SK-N-SH (cell line): ENCODE measurements at regions of chr1 and their contacts with region 1.

Region 1: GRCh38 chr1:53860967-53861411 is 22.9 kb upstream of the NDC1 start:
- DNase-seq: peak; percentile 64
- H3K4me3 ChIP-seq: peak overlapping the region in 1 of 2 experiments; percentile 25; a peak in 1 of 4 replicates
- H3K27ac ChIP-seq: no peak overlapping the region
- H3K4me1 ChIP-seq: no peaks in the 10 kb centered on the region
- H3K27me3 ChIP-seq: no peaks in the 10 kb centered on the region
- CTCF ChIP-seq: peak; percentile 88
- EP300 ChIP-seq: no peak
- RAD21 ChIP-seq: peak; percentile 87

Region 2: DNA sequence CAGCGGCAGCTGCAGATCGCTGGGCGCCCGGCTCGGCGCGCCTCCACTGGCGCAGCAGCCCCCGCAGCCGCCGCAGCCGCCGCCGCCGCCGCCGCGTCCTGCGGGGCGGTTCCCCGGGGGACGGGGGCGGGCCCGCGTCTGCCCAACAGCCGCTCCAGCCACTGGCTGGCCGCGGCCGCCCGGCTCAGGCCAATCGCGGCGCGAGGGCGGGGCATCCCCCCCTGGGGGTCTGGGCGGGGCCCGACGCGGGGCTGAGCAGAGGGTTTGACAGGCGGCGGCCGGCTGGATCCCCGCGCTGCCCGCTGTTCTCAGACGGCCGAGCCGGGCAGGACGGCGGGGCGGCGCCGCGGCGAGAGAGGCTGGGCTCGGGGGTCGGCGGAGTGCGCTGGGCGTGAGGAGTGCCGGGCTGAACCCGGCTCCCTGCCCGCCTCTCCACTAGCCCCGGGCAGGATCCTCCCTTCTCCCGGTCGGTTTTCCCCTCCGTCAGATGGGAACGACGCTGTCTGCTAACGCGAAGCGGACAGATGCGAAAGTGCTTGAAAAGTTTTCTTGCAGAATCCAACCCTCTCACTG is 121.8 kb before region 1 on chr1 and contains the start of gene GLIS1:
- CTCF ChIA-PET with region 1: no interaction called
- POLR2A ChIA-PET with region 1: no interaction called
- DNase-seq: peak; percentile 100
- H3K4me3 ChIP-seq: peak within 1 kb of the TSS; percentile 54 to 73
- H3K27ac ChIP-seq: no peak within 1 kb of the TSS; a peak in 1 of 4 replicates
- H3K4me1 ChIP-seq: peaks cover 8 to 14% of the 10 kb centered on the region in 2 experiments; a peak in 3 of 4 replicates
- H3K27me3 ChIP-seq: no peaks in the 10 kb centered on the region
- CTCF ChIP-seq: no peak
- EP300 ChIP-seq: no peak
- RAD21 ChIP-seq: no peak
- polyA plus RNA-seq, gene GLIS1: 0.05 and 0.13 TPM in 2 replicates

Region 3: DNA sequence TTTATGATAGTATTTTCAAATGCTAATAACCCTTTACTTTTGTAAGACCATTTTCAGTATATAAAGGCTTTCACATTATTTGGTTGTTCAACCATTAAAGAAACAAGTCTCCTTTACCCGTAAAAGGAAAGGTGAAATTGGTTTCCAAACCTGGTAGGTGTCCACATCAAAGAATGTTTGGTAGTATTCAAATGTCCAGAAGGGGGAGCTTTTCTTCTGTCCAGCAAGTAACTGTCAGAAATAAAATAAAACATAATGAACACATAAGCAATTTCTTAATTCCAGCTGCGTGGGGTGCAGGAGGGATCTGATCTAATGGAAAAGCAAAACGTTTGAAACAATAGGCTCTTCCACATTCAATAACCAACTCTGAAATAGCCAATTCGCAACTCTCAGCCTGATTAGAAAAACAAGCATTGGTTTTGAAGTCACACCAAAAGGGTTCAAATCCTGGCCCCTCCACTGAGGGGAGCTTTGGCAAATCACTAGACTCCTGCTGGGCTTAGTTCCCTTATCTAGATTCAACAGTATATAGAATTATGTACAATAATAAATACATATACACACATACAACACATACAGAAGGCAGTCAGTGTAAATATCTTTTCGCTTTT is 17.6 kb after region 1 on chr1:
- CTCF ChIA-PET with region 1: interaction called, 27 read pairs
- POLR2A ChIA-PET with region 1: no interaction called
- DNase-seq: peak; percentile 39
- H3K4me3 ChIP-seq: no peak overlapping the region
- H3K27ac ChIP-seq: no peak overlapping the region
- H3K4me1 ChIP-seq: no peaks in the 10 kb centered on the region
- H3K27me3 ChIP-seq: no peaks in the 10 kb centered on the region
- CTCF ChIP-seq: peak; percentile 82
- EP300 ChIP-seq: no peak
- RAD21 ChIP-seq: peak; percentile 68

Region 4: GRCh38 chr1:53899206-53899628 is 38.2 kb after region 1 on chr1:
- CTCF ChIA-PET with region 1: interaction called, 14 read pairs
- POLR2A ChIA-PET with region 1: no interaction called
- DNase-seq: no peak
- H3K4me3 ChIP-seq: no peak overlapping the region
- H3K27ac ChIP-seq: no peak overlapping the region
- H3K4me1 ChIP-seq: no peaks in the 10 kb centered on the region; a peak in 1 of 4 replicates
- H3K27me3 ChIP-seq: no peaks in the 10 kb centered on the region
- CTCF ChIP-seq: no peak
- EP300 ChIP-seq: no peak
- RAD21 ChIP-seq: no peak

Region 5: GRCh38 chr1:53959664-53960250 is 98.8 kb after region 1 on chr1:
- CTCF ChIA-PET with region 1: interaction called, 45 read pairs
- POLR2A ChIA-PET with region 1: no interaction called
- DNase-seq: peak; percentile 47
- H3K4me3 ChIP-seq: no peak overlapping the region
- H3K27ac ChIP-seq: no peak overlapping the region
- H3K4me1 ChIP-seq: peaks cover 4 to 7% of the 10 kb centered on the region in 2 experiments; a peak in 3 of 4 replicates
- H3K27me3 ChIP-seq: no peaks in the 10 kb centered on the region
- CTCF ChIP-seq: peak; percentile 71
- EP300 ChIP-seq: no peak
- RAD21 ChIP-seq: peak; percentile 63

Region 6: GRCh38 chr1:53992085-53992874 is 131.3 kb after region 1 on chr1:
- CTCF ChIA-PET with region 1: no interaction called
- POLR2A ChIA-PET with region 1: no interaction called
- DNase-seq: no peak
- H3K4me3 ChIP-seq: no peak overlapping the region
- H3K27ac ChIP-seq: no peak overlapping the region
- H3K4me1 ChIP-seq: no peaks in the 10 kb centered on the region
- H3K27me3 ChIP-seq: no peaks in the 10 kb centered on the region
- CTCF ChIP-seq: no peak
- EP300 ChIP-seq: no peak
- RAD21 ChIP-seq: peak; percentile 11; the same call in 1 of the 2 replicates

Region 7: GRCh38 chr1:54668567-54668966 is 807.6 kb after region 1 on chr1:
- CTCF ChIA-PET with region 1: no interaction called
- POLR2A ChIA-PET with region 1: no interaction called
- DNase-seq: no peak
- H3K4me3 ChIP-seq: no peak overlapping the region
- H3K27ac ChIP-seq: no peak overlapping the region
- H3K4me1 ChIP-seq: no peaks in the 10 kb centered on the region
- H3K27me3 ChIP-seq: no peaks in the 10 kb centered on the region; the same call in 1 of the 2 replicates
- CTCF ChIP-seq: no peak
- EP300 ChIP-seq: no peak
- RAD21 ChIP-seq: no peak